CD4-positive, alpha-beta memory T cell (primary cell): ENCODE measurements at regions of chr6 and their contacts with region 1.

Region 1: GRCh38 chr6:144215932-144216667 is 65.8 kb downstream of the STX11 start:
- DNase-seq: peak; percentile 93 to 96 (median 94)
- H3K4me3 ChIP-seq: peak overlapping the region; percentile 43 to 70
- H3K4me3 Mint-ChIP-seq: peak overlapping the region; percentile 89 to 99 (median 94)
- H3K27ac ChIP-seq: peak overlapping the region; percentile 73
- H3K27ac Mint-ChIP-seq: peak overlapping the region; percentile 98 to 100 (median 99)
- H3K4me1 ChIP-seq: peaks cover 31% of the 10 kb centered on the region
- H3K4me1 Mint-ChIP-seq: peaks cover 26 to 47% (median 36%) of the 10 kb centered on the region in 4 donors
- H3K27me3 ChIP-seq: no peaks in the 10 kb centered on the region
- H3K27me3 Mint-ChIP-seq: peaks cover 0 to 11% of the 10 kb centered on the region in 2 donors

Region 2: GRCh38 chr6:143842902-143843676 is 373.0 kb before region 1 on chr6 and contains the start of gene LTV1:
- CTCF ChIA-PET with region 1: no interaction called
- POLR2A ChIA-PET with region 1: no interaction called
- intact Hi-C with region 1: loop called (anchors 1 kb)
- DNase-seq: peak; percentile 89 to 92 (median 90)
- H3K4me3 ChIP-seq: peak within 1 kb of the TSS; percentile 54 to 90
- H3K4me3 Mint-ChIP-seq: peak within 1 kb of the TSS; percentile 93 to 97 (median 95)
- H3K27ac ChIP-seq: peak within 1 kb of the TSS; percentile 92
- H3K27ac Mint-ChIP-seq: peak within 1 kb of the TSS; percentile 96 to 99 (median 98)
- H3K4me1 ChIP-seq: peaks cover 15% of the 10 kb centered on the region
- H3K4me1 Mint-ChIP-seq: peaks cover 19 to 32% (median 25%) of the 10 kb centered on the region in 4 donors
- H3K27me3 ChIP-seq: no peaks in the 10 kb centered on the region
- H3K27me3 Mint-ChIP-seq: no peaks in the 10 kb centered on the region
- total RNA-seq, gene LTV1: 19.9 to 20.8 TPM

Region 3: GRCh38 chr6:144013486-144013909 is 202.6 kb before region 1 on chr6:
- CTCF ChIA-PET with region 1: no interaction called
- POLR2A ChIA-PET with region 1: no interaction called
- intact Hi-C with region 1: loop called (anchors 5 kb)
- DNase-seq: peak; percentile 50 to 61 (median 56)
- H3K4me3 ChIP-seq: no peak overlapping the region
- H3K4me3 Mint-ChIP-seq: no peak overlapping the region
- H3K27ac ChIP-seq: no peak overlapping the region
- H3K27ac Mint-ChIP-seq: no peak overlapping the region
- H3K4me1 ChIP-seq: no peaks in the 10 kb centered on the region
- H3K4me1 Mint-ChIP-seq: peaks cover 0 to 2% (median under 1%) of the 10 kb centered on the region in 4 donors
- H3K27me3 ChIP-seq: no peaks in the 10 kb centered on the region
- H3K27me3 Mint-ChIP-seq: peaks cover 1 to 4% of the 10 kb centered on the region in 2 donors

Region 4: GRCh38 chr6:144063744-144064401 is 152.2 kb before region 1 on chr6:
- CTCF ChIA-PET with region 1: no interaction called
- POLR2A ChIA-PET with region 1: interaction called, 7 read pairs
- intact Hi-C with region 1: loop called (anchors 1 kb)
- DNase-seq: peak; percentile 90 to 92 (median 91)
- H3K4me3 ChIP-seq: peak overlapping the region; percentile 38 to 91
- H3K4me3 Mint-ChIP-seq: peak overlapping the region; percentile 90 to 95 (median 93)
- H3K27ac ChIP-seq: peak overlapping the region; percentile 88
- H3K27ac Mint-ChIP-seq: peak overlapping the region; percentile 91 to 97 (median 96)
- H3K4me1 ChIP-seq: peaks cover 20% of the 10 kb centered on the region
- H3K4me1 Mint-ChIP-seq: peaks cover 21 to 36% (median 28%) of the 10 kb centered on the region in 4 donors
- H3K27me3 ChIP-seq: no peaks in the 10 kb centered on the region
- H3K27me3 Mint-ChIP-seq: no peaks in the 10 kb centered on the region

Region 5: DNA sequence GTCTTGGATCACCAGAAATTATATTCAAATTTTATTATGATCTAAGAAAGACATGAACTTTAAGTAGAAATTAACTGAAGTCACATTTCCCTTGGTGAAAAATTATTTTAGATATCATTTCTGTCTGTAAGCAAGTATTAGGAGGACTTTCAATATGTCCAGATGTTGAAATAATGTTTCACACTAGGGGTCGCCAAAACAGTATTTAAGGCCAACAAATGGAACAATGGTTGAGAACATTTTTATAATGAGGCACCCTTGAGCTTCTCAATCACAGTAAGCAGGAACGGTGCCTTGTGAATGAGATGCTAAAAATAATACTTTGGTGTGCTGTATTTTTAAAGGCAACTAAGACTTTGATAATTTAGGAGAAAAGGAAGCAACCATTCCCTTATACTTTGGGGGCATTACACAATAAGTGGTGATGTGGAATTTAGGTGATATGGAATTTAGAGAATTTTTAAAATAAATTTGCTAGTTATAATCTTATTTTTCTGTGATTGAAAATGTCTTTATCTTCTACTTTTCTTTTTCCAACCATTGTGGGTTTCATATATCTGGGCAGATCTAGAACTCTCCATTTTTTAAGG is 111.1 kb before region 1 on chr6:
- CTCF ChIA-PET with region 1: interaction called, 29 read pairs
- POLR2A ChIA-PET with region 1: interaction called, 3 read pairs
- intact Hi-C with region 1: loop called (anchors 1 kb)
- DNase-seq: peak; percentile 45 to 70 (median 67)
- H3K4me3 ChIP-seq: no peak overlapping the region
- H3K4me3 Mint-ChIP-seq: no peak overlapping the region
- H3K27ac ChIP-seq: no peak overlapping the region
- H3K27ac Mint-ChIP-seq: peak overlapping the region in 1 of 7 donors; percentile 84
- H3K4me1 ChIP-seq: no peaks in the 10 kb centered on the region
- H3K4me1 Mint-ChIP-seq: peaks cover 1 to 4% (median 3%) of the 10 kb centered on the region in 4 donors
- H3K27me3 ChIP-seq: no peaks in the 10 kb centered on the region
- H3K27me3 Mint-ChIP-seq: no peaks in the 10 kb centered on the region

Region 6: DNA sequence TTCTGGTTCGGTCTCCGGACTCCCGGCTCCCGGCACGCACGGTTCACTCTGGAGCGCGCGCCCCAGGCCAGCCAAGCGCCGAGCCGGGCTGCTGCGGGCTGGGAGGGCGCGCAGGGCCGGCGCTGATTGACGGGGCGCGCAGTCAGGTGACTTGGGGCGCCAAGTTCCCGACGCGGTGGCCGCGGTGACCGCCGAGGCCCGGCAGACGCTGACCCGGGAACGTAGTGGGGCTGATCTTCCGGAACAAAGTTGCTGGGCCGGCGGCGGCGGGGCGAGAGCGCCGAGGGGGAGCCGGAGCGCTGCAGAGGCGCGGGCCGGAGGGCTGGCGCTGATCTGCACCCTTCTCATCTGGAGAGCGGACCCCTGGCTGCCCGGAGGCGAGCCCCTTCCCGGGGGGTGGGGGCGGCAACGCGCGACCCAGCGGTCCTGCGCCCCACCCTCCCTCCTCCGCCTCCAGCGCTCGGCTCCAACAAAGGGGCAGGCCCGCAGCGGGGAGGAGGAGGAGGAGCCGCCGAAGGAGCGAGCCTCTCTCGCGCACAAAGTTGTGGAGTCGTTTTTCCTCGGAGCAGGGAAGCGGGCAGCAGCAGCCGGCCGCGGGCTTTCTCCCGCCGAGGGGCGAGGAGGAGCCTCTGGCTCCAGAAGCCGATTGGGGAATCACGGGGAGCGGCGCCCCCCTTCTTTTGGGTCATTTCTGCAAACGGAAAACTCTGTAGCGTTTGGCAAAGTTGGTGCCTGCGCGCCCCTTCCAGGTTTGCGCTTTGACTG is 68.9 kb after region 1 on chr6 and contains the start of gene UTRN:
- CTCF ChIA-PET with region 1: no interaction called
- POLR2A ChIA-PET with region 1: no interaction called
- intact Hi-C with region 1: loop called (anchors 2 kb)
- DNase-seq: peak; percentile 18 to 40 (median 30)
- H3K4me3 ChIP-seq: peak within 1 kb of the TSS; percentile 65 to 89
- H3K4me3 Mint-ChIP-seq: peak within 1 kb of the TSS; percentile 88 to 98 (median 96)
- H3K27ac ChIP-seq: peak within 1 kb of the TSS; percentile 10
- H3K27ac Mint-ChIP-seq: peak within 1 kb of the TSS; percentile 53 to 86 (median 68)
- H3K4me1 ChIP-seq: peaks cover 20% of the 10 kb centered on the region
- H3K4me1 Mint-ChIP-seq: peaks cover 9 to 23% (median 18%) of the 10 kb centered on the region in 4 donors
- H3K27me3 ChIP-seq: no peaks in the 10 kb centered on the region
- H3K27me3 Mint-ChIP-seq: no peaks in the 10 kb centered on the region
- total RNA-seq, gene UTRN: 219 to 227 TPM

Region 7: GRCh38 chr6:144482142-144482541 is 266.0 kb after region 1 on chr6:
- CTCF ChIA-PET with region 1: interaction called, 14 read pairs
- POLR2A ChIA-PET with region 1: no interaction called
- intact Hi-C with region 1: loop called (anchors 1 kb)
- DNase-seq: peak; percentile 58 to 74 (median 60)
- H3K4me3 ChIP-seq: no peak overlapping the region
- H3K4me3 Mint-ChIP-seq: no peak overlapping the region
- H3K27ac ChIP-seq: no peak overlapping the region
- H3K27ac Mint-ChIP-seq: peak overlapping the region in 5 of 7 donors; percentile 18 to 62 (median 23)
- H3K4me1 ChIP-seq: no peaks in the 10 kb centered on the region
- H3K4me1 Mint-ChIP-seq: peaks cover 0 to 12% (median 3%) of the 10 kb centered on the region in 4 donors
- H3K27me3 ChIP-seq: no peaks in the 10 kb centered on the region
- H3K27me3 Mint-ChIP-seq: no peaks in the 10 kb centered on the region